Breast epithelium (tissue), 4 donors: ENCODE measurements at regions of chr5 and their contacts with region 1.

Region 1: DNA sequence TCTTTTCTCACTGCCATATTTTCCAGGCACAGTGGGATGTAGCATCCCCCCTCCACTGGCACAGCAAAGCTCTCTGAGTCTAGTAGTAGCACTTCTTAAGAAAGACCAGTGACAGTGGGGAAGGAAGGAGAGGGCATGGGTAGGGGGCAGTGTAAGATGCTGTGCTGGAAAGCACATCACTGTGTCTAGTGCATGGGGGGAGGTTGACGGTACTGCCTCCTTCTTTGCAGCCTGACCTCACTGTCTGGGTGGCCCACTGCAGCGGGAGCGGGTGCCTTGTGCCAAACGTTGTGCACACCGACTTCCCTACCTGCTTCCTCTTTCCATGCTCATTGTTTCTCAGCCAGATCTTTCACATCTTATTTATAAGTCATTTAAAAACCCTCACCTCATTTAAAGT is 91.8 kb downstream of the PDE8B start:
- DNase-seq: no peak
- H3K4me3 ChIP-seq: no peak overlapping the region
- H3K27ac ChIP-seq: no peak overlapping the region
- H3K4me1 ChIP-seq: no peaks in the 10 kb centered on the region
- H3K27me3 ChIP-seq: no peaks in the 10 kb centered on the region
- CTCF ChIP-seq: no peak
- POLR2A ChIP-seq: no peak

Region 2: DNA sequence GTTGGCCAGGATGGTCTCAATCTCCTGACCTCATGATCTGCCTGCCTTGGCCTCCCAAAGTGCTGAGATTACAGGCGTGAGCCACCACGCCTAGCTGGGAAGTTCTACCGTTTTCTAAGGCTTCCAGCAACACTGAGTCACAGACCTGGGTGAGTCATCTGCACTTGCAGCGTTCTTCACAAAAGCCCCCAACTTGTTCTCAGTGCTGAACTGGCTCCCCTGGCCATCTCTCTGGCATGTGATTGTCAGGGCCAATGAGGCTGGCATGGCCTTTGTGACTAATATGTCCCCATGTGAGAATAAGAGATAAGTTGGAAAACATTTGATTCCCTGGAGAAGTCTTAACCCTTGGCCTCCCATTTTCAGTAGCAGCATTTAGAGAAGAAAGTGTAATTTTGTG is 65.5 kb after region 1 on chr5:
- intact Hi-C with region 1: loop called (anchors 2 kb)
- DNase-seq: no peak
- H3K4me3 ChIP-seq: no peak overlapping the region
- H3K27ac ChIP-seq: no peak overlapping the region
- H3K4me1 ChIP-seq: no peaks in the 10 kb centered on the region
- H3K27me3 ChIP-seq: no peaks in the 10 kb centered on the region
- CTCF ChIP-seq: no peak
- POLR2A ChIP-seq: no peak